Endothelial cell of umbilical vein (primary cell): ENCODE measurements at regions of chr12 and their contacts with region 1.

Region 1: GRCh38 chr12:113005754-113006153 is 27.4 kb downstream of the OAS2 start:
- DNase-seq: no peak
- H3K4me3 ChIP-seq: no peak overlapping the region
- H3K27ac ChIP-seq: no peak overlapping the region
- H3K4me1 ChIP-seq: peaks cover 20% of the 10 kb centered on the region
- H3K27me3 ChIP-seq: no peaks in the 10 kb centered on the region
- CTCF ChIP-seq: peak; percentile 19 to 30
- POLR2A ChIP-seq: no peak

Region 2: GRCh38 chr12:112961074-112961473 is 44.7 kb before region 1 on chr12:
- CTCF ChIA-PET with region 1: no interaction called
- POLR2A ChIA-PET with region 1: no interaction called
- dilution Hi-C with region 1: no loop called
- intact Hi-C with region 1: no loop called
- DNase-seq: no peak
- H3K4me3 ChIP-seq: no peak overlapping the region
- H3K27ac ChIP-seq: no peak overlapping the region
- H3K4me1 ChIP-seq: no peaks in the 10 kb centered on the region
- H3K27me3 ChIP-seq: no peaks in the 10 kb centered on the region
- CTCF ChIP-seq: no peak
- POLR2A ChIP-seq: no peak

Region 3: GRCh38 chr12:113019041-113019440 is 13.3 kb after region 1 on chr12:
- CTCF ChIA-PET with region 1: interaction called, 70 read pairs
- POLR2A ChIA-PET with region 1: no interaction called
- dilution Hi-C with region 1: no loop called
- intact Hi-C with region 1: loop called (anchors 1 kb)
- DNase-seq: peak; percentile 75
- H3K4me3 ChIP-seq: peak overlapping the region in 1 of 3 experiments; percentile 50
- H3K27ac ChIP-seq: peak overlapping the region; percentile 63
- H3K4me1 ChIP-seq: peaks cover 21% of the 10 kb centered on the region
- H3K27me3 ChIP-seq: no peaks in the 10 kb centered on the region
- CTCF ChIP-seq: no peak
- POLR2A ChIP-seq: peak; percentile 28

Region 4: DNA sequence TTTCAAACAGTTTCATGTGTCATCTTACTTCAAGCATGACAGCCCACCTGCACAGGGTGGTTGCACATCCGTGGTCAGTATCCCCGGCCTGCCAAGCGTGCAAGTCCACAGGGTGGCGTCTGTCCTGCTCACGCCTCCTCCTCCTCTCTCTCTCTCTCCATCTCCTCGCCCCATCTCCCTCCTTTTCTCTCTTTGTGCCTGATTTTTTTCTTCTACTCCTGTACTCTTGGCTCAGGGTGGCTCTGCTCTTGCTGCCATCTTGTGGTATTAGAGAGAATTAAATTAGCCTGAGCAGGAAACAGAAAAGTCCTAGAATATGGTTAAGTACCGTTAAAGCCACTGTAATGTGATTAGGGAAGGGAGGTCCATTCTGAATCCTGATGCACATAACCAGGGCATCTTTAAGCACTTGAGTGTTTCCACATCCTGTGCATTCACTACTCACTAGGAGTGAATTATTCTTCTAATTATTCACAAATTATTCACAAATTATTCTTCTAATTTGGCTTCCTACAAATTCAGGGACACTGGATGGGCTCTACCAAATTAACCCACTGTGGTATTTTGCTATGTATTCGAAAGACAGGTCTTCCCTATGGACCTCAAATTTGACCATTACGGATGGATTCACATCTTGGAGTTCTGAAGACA is 25.2 kb after region 1 on chr12:
- CTCF ChIA-PET with region 1: interaction called, 72 read pairs
- POLR2A ChIA-PET with region 1: no interaction called
- dilution Hi-C with region 1: no loop called
- intact Hi-C with region 1: loop called (anchors 1 kb)
- DNase-seq: peak; percentile 77
- H3K4me3 ChIP-seq: no peak overlapping the region
- H3K27ac ChIP-seq: no peak overlapping the region
- H3K4me1 ChIP-seq: no peaks in the 10 kb centered on the region
- H3K27me3 ChIP-seq: no peaks in the 10 kb centered on the region
- CTCF ChIP-seq: peak; percentile 58 to 65
- POLR2A ChIP-seq: no peak

Region 5: GRCh38 chr12:113040722-113041171 is 35.0 kb after region 1 on chr12:
- CTCF ChIA-PET with region 1: interaction called, 4 read pairs
- POLR2A ChIA-PET with region 1: no interaction called
- dilution Hi-C with region 1: no loop called
- intact Hi-C with region 1: loop called (anchors 2 kb)
- DNase-seq: peak; percentile 72
- H3K4me3 ChIP-seq: no peak overlapping the region
- H3K27ac ChIP-seq: peak overlapping the region; percentile 63
- H3K4me1 ChIP-seq: peaks cover 12% of the 10 kb centered on the region
- H3K27me3 ChIP-seq: peaks cover 0 to 4% of the 10 kb centered on the region in 2 experiments
- CTCF ChIP-seq: no peak
- POLR2A ChIP-seq: peak; percentile 24